ENCODE measurements at regions of chr3 and their contacts with region 1.

Region 1: GRCh38 chr3:15647611-15648167 is 46.1 kb downstream of the BTD start:
- DNase-seq: peak; percentile 98
- H3K4me3 ChIP-seq: no peak overlapping the region
- H3K27ac ChIP-seq: peak overlapping the region; percentile 99
- H3K4me1 ChIP-seq: peaks cover 46% of the 10 kb centered on the region
- H3K27me3 ChIP-seq: no peaks in the 10 kb centered on the region
- CTCF ChIP-seq: no peak
- POLR2A ChIP-seq: peak; percentile 63

Region 2: DNA sequence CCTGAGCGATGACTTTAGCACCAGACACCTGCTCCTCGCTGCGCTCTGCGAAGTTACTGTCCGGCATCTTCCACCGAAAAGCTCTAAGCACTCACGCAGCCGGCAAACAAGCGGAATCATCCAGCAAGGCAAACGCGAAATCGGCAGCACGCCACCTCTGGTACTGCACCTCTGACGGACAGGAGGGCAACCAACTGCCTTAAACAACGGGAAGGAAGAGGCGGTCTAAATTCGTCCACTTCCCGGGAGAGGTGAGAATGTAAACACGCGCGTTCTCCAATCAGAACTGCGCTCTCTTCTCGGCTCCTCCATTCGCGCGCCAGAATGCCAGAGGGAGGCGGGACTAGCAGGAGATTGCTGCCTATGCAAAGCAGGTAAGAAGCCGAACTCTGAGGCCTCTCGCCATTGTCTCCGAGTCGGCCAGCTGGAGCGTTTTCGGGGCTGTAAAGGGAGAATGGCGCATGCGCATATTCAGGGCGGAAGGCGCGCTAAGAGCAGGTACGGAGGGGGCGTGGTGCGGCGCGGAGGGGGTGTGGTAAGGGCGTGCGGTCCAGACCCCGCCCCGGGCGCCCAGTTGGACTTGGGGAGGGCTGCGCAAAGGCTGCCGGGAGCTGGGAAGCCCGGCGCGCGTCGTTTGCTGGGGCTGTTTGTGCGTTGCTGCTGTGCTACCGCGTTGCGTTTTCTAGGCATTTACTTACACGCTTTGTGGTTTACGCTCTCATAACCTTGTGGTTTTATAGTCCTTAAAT is 46.1 kb before region 1 on chr3 and contains the starts of genes BTD and HACL1:
- CTCF ChIA-PET with region 1: no interaction called
- POLR2A ChIA-PET with region 1: interaction called, 4 read pairs
- dilution Hi-C with region 1: no loop called
- intact Hi-C with region 1: loop called (anchors 1 kb)
- DNase-seq: peak; percentile 100
- H3K4me3 ChIP-seq: peak within 1 kb of the TSS; percentile 73 to 86 (median 74)
- H3K27ac ChIP-seq: peak within 1 kb of the TSS; percentile 61
- H3K4me1 ChIP-seq: peaks cover 16% of the 10 kb centered on the region
- H3K27me3 ChIP-seq: no peaks in the 10 kb centered on the region
- CTCF ChIP-seq: no peak
- POLR2A ChIP-seq: peak; percentile 94
- total RNA-seq, gene BTD: 18.7 and 20.3 TPM in 2 replicates
- total RNA-seq, gene HACL1: 27.4 and 29.9 TPM in 2 replicates

Region 3: GRCh38 chr3:15623535-15624440 is 23.9 kb before region 1 on chr3:
- CTCF ChIA-PET with region 1: no interaction called
- POLR2A ChIA-PET with region 1: no interaction called
- dilution Hi-C with region 1: no loop called
- intact Hi-C with region 1: no loop called
- DNase-seq: no peak
- H3K4me3 ChIP-seq: no peak overlapping the region
- H3K27ac ChIP-seq: no peak overlapping the region
- H3K4me1 ChIP-seq: no peaks in the 10 kb centered on the region
- H3K27me3 ChIP-seq: no peaks in the 10 kb centered on the region
- CTCF ChIP-seq: no peak
- POLR2A ChIP-seq: no peak

Region 4: DNA sequence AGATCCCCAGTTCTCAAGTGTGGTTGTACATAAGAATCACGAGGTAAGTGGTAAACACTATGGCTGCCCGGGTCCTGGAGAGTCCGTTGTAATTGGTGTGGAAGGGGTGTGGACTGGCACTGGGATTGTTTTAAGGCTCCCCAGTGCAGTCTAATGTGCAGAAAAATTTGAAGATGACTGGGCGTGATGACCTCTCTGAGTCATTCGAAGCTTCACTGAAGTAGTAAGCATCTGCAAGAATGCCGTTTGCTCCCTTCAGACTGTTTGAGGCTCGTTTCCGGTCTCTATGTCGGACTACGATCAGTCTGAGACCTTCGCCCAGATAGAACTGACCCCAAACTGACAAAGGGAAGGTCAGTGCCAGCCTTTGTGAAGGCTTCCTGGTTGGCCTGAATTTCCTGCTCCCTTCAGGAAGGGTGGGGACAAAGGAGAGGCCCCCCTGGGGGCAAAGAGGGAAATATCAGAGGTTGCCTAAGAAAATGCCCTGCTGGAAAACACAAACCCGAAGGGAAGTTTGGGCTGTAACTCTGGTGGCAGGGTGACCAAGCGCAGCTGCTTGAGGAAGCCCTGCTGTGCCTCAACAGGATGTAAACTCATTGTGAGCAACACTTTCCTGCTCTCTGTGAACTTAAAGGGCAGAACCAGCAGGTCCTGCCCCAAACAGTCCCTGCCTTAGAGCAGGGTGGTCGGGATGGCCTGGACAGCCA is 11.5 kb before region 1 on chr3:
- CTCF ChIA-PET with region 1: interaction called, 44 read pairs
- POLR2A ChIA-PET with region 1: interaction called, 21 read pairs
- dilution Hi-C with region 1: no loop called
- intact Hi-C with region 1: loop called (anchors 1 kb)
- DNase-seq: peak; percentile 96
- H3K4me3 ChIP-seq: no peak overlapping the region
- H3K27ac ChIP-seq: peak overlapping the region; percentile 93
- H3K4me1 ChIP-seq: peaks cover 73% of the 10 kb centered on the region
- H3K27me3 ChIP-seq: no peaks in the 10 kb centered on the region
- CTCF ChIP-seq: peak in 1 of 2 donors; percentile 5
- POLR2A ChIP-seq: peak; percentile 87

Region 5: DNA sequence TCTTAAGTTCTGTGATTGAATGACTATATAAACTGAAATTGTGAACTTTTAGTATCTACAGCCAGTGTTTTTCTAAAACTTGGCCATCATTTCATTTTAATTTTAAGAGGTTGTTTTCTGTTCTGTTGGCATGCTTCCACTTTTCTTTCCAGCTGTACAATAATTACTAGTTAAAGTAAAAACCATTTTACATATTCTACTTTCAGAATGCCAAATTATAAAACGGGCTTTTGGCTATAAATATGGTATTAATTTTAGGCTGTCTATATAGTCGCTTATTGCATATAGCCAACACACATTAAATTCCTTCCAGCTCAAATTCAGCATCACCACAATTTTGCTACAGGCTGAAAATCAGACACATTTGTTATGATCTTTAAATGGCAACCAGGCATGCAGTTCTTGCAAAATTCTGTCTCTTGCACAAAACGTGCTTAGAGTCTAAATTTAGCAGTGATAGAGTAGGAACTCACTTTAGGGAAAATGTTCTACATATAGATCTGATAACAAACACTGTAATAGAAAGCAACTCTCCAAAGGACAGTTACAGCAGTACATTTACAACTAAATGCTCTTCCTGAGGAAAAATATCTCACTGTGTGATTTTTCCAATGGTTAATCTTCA is 35.0 kb after region 1 on chr3:
- CTCF ChIA-PET with region 1: interaction called, 6 read pairs
- POLR2A ChIA-PET with region 1: no interaction called
- dilution Hi-C with region 1: no loop called
- intact Hi-C with region 1: loop called (anchors 2 kb)
- DNase-seq: peak; percentile 35
- H3K4me3 ChIP-seq: no peak overlapping the region
- H3K27ac ChIP-seq: no peak overlapping the region
- H3K4me1 ChIP-seq: peaks cover 26% of the 10 kb centered on the region
- H3K27me3 ChIP-seq: no peaks in the 10 kb centered on the region
- CTCF ChIP-seq: no peak
- POLR2A ChIP-seq: no peak

Region 6: DNA sequence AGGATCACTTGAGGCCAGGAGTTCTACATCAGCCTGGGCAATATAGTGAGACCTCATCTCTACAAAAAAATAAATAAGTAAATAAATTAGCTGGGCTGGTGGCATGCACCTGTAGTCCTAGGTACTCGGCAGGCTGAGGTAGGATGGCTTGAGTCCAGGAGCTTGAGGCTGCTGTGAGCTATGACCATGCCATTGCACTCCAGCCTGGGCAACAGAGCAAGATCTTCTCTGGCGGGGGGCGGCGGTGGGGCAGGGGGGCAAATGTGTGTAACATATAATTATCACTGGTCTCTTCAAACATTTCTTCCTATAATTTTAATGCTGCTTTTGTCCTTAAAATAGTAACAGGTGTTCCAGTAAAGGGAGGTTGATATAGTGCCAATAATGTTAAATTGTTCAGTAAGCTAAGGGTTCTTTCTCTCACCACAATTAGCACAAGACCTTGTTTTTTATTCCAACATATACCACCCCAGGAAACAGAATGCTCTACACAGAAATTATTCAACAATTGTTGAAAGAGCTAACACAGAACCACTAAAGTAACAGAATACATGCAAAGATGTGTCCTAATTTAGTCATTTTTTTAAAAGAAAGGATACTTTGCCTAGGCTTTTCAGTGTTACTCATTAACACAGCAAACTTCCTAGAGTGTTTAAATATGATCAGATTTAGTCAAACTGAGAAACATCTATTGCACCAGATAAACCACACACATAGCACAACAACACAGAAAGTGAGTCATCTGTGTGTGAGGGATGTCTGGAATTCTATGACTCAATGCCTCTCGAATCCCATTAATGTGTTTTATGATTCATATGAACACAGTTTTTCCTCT is 120.9 kb after region 1 on chr3:
- CTCF ChIA-PET with region 1: no interaction called
- POLR2A ChIA-PET with region 1: no interaction called
- dilution Hi-C with region 1: no loop called
- intact Hi-C with region 1: loop called (anchors 1 kb)
- DNase-seq: peak; percentile 94
- H3K4me3 ChIP-seq: no peak overlapping the region
- H3K27ac ChIP-seq: peak overlapping the region; percentile 89
- H3K4me1 ChIP-seq: peaks cover 17% of the 10 kb centered on the region
- H3K27me3 ChIP-seq: no peaks in the 10 kb centered on the region
- CTCF ChIP-seq: no peak
- POLR2A ChIP-seq: no peak

Region 7: DNA sequence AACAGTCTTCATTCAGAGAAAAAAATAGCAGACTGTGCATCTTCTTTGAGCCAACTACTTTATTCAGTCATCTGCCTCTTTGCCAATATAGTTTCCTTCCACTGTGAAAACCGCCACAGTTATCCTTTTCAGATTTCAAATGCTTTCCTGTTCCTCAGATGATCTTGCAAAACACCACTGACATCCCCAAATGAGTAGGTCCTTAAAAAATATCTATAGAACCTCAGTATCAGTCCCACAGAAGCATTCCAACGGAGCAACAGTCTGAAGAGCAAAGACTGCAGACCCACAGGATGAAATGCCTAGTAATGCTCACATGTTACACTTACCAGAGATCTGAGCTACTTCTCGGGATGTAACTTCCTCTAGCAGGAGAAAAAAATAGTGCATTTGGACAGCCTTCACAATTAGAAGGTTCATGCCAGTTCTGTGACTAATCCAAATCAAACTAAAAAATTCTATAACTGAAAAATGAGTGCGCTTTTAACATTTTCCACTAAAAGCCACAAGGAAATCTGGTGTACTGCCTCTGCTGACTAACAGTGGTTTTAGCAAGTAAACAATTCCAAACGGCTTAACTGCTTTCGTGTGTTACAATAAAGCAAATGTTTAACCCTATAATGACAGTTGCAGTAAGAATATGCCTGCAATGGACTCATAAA is 150.1 kb after region 1 on chr3 and contains the start of gene ANKRD28:
- CTCF ChIA-PET with region 1: interaction called, 6 read pairs
- POLR2A ChIA-PET with region 1: interaction called, 4 read pairs
- dilution Hi-C with region 1: no loop called
- intact Hi-C with region 1: loop called (anchors 1 kb)
- DNase-seq: peak; percentile 95
- H3K4me3 ChIP-seq: peak within 1 kb of the TSS; percentile 26 to 100 (median 84)
- H3K27ac ChIP-seq: peak within 1 kb of the TSS; percentile 96
- H3K4me1 ChIP-seq: peaks cover 26% of the 10 kb centered on the region
- H3K27me3 ChIP-seq: no peaks in the 10 kb centered on the region
- CTCF ChIP-seq: peak in 1 of 2 donors; percentile 31
- POLR2A ChIP-seq: no peak
- total RNA-seq, gene ANKRD28: 82.2 and 97.3 TPM in 2 replicates

Region 8: DNA sequence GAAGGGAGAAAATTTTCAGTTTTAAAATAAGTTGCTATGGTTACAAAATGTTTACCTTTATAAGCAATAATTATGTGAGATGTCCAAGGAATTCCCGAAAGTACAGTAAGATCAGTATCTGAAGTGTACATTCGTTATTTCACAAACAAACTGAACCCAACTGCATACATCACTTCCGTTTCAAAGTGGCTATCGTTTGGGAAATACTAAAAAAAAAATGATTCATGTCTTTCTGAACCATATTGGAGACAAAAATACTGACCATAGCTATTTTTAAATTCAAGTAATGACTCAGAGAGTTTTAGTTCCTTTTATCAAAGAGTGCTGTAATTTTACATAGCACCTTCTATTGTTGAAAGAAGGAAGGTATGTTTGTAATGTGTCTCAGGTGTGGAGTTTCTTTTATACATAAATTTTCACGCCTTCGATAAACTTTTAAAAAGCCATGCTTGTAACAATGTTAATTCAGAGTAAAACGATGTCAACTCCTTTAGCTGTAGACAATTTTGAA is 158.1 kb after region 1 on chr3:
- CTCF ChIA-PET with region 1: no interaction called
- POLR2A ChIA-PET with region 1: no interaction called
- dilution Hi-C with region 1: no loop called
- intact Hi-C with region 1: loop called (anchors 1 kb)
- DNase-seq: peak; percentile 90
- H3K4me3 ChIP-seq: no peak overlapping the region
- H3K27ac ChIP-seq: peak overlapping the region; percentile 37
- H3K4me1 ChIP-seq: peaks cover 15% of the 10 kb centered on the region
- H3K27me3 ChIP-seq: no peaks in the 10 kb centered on the region
- CTCF ChIP-seq: no peak
- POLR2A ChIP-seq: no peak

Measured in endothelial cell of umbilical vein (primary cell).